Activated CD4-positive, alpha-beta memory T cell treated with anti-CD3 and anti-CD28 coated beads for 36 hours (primary cell): ENCODE measurements at regions of chr21 and their contacts with region 1.

Region 1: GRCh38 chr21:42424914-42425541 is 21.3 kb downstream of the UBASH3A start:
- DNase-seq: peak; percentile 84
- H3K4me3 Mint-ChIP-seq: peak overlapping the region; percentile 48
- H3K27ac Mint-ChIP-seq: peak overlapping the region; percentile 86
- H3K4me1 Mint-ChIP-seq: peaks cover 72% of the 10 kb centered on the region
- H3K27me3 Mint-ChIP-seq: no peaks in the 10 kb centered on the region

Region 2: GRCh38 chr21:42187976-42188653 is 236.9 kb before region 1 on chr21:
- CTCF ChIA-PET with region 1: no interaction called
- POLR2A ChIA-PET with region 1: no interaction called
- intact Hi-C with region 1: loop called (anchors 5 kb)
- DNase-seq: peak; percentile 92
- H3K4me3 Mint-ChIP-seq: peak overlapping the region; percentile 60
- H3K27ac Mint-ChIP-seq: peak overlapping the region; percentile 96
- H3K4me1 Mint-ChIP-seq: peaks cover 62% of the 10 kb centered on the region
- H3K27me3 Mint-ChIP-seq: no peaks in the 10 kb centered on the region

Region 3: GRCh38 chr21:42266971-42267556 is 158.0 kb before region 1 on chr21:
- CTCF ChIA-PET with region 1: no interaction called
- POLR2A ChIA-PET with region 1: no interaction called
- intact Hi-C with region 1: no loop called
- DNase-seq: no peak
- H3K4me3 Mint-ChIP-seq: no peak overlapping the region
- H3K27ac Mint-ChIP-seq: no peak overlapping the region
- H3K4me1 Mint-ChIP-seq: peaks cover 21% of the 10 kb centered on the region
- H3K27me3 Mint-ChIP-seq: no peaks in the 10 kb centered on the region

Region 4: GRCh38 chr21:42374864-42375492 is 50.0 kb before region 1 on chr21:
- CTCF ChIA-PET with region 1: no interaction called
- POLR2A ChIA-PET with region 1: interaction called, 9 read pairs
- intact Hi-C with region 1: loop called (anchors 2 kb)
- DNase-seq: peak; percentile 51
- H3K4me3 Mint-ChIP-seq: peak overlapping the region; percentile 63
- H3K27ac Mint-ChIP-seq: peak overlapping the region; percentile 95
- H3K4me1 Mint-ChIP-seq: peaks cover 33% of the 10 kb centered on the region
- H3K27me3 Mint-ChIP-seq: no peaks in the 10 kb centered on the region

Region 5: DNA sequence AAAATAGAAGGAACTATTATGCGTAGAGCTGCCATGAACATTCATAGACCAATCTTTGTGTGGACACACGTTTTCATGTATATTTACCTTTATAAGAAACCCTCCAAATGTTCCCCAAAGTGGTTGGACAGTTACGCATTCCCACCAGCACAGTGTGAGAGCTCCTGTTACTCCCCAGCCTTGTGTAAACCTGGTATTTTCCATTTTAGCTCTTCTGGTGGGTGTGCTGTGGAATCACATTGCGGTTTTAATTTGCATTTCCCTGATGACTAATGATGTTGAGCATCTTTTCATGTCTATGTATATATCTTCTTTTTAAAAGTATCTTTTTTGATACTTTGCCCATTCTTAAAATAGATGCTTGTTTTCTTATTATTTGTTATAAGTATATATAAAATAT is 24.5 kb before region 1 on chr21:
- CTCF ChIA-PET with region 1: interaction called, 7 read pairs
- POLR2A ChIA-PET with region 1: interaction called, 79 read pairs
- intact Hi-C with region 1: no loop called
- DNase-seq: peak; percentile 55
- H3K4me3 Mint-ChIP-seq: peak overlapping the region; percentile 49
- H3K27ac Mint-ChIP-seq: peak overlapping the region; percentile 77
- H3K4me1 Mint-ChIP-seq: peaks cover 50% of the 10 kb centered on the region
- H3K27me3 Mint-ChIP-seq: no peaks in the 10 kb centered on the region

Region 6: GRCh38 chr21:42440187-42440792 is 15.3 kb after region 1 on chr21:
- CTCF ChIA-PET with region 1: no interaction called
- POLR2A ChIA-PET with region 1: interaction called, 4 read pairs
- intact Hi-C with region 1: loop called (anchors 1 kb)
- DNase-seq: peak; percentile 75
- H3K4me3 Mint-ChIP-seq: no peak overlapping the region
- H3K27ac Mint-ChIP-seq: peak overlapping the region; percentile 84
- H3K4me1 Mint-ChIP-seq: peaks cover 45% of the 10 kb centered on the region
- H3K27me3 Mint-ChIP-seq: no peaks in the 10 kb centered on the region